ENCODE measurements at regions of chr10 and their contacts with region 1.

Region 1: GRCh38 chr10:123967396-123968243 is 76.0 kb upstream of the CPXM2 start:
- DNase-seq: peak; percentile 78 to 87 (median 87)
- ATAC-seq: peak; percentile 67 to 83
- H3K4me3 ChIP-seq: no peak overlapping the region
- H3K27ac ChIP-seq: no peak overlapping the region
- H3K4me1 ChIP-seq: no peaks in the 10 kb centered on the region
- H3K27me3 ChIP-seq: no peaks in the 10 kb centered on the region

Region 2: GRCh38 chr10:123582084-123582989 is 385.3 kb before region 1 on chr10:
- intact Hi-C with region 1: loop called (anchors 2 to 5 kb)
- DNase-seq: peak; percentile 71 to 87 (median 86)
- ATAC-seq: peak; percentile 65 to 66
- H3K4me3 ChIP-seq: no peak overlapping the region
- H3K27ac ChIP-seq: no peak overlapping the region
- H3K4me1 ChIP-seq: no peaks in the 10 kb centered on the region
- H3K27me3 ChIP-seq: no peaks in the 10 kb centered on the region

Region 3: DNA sequence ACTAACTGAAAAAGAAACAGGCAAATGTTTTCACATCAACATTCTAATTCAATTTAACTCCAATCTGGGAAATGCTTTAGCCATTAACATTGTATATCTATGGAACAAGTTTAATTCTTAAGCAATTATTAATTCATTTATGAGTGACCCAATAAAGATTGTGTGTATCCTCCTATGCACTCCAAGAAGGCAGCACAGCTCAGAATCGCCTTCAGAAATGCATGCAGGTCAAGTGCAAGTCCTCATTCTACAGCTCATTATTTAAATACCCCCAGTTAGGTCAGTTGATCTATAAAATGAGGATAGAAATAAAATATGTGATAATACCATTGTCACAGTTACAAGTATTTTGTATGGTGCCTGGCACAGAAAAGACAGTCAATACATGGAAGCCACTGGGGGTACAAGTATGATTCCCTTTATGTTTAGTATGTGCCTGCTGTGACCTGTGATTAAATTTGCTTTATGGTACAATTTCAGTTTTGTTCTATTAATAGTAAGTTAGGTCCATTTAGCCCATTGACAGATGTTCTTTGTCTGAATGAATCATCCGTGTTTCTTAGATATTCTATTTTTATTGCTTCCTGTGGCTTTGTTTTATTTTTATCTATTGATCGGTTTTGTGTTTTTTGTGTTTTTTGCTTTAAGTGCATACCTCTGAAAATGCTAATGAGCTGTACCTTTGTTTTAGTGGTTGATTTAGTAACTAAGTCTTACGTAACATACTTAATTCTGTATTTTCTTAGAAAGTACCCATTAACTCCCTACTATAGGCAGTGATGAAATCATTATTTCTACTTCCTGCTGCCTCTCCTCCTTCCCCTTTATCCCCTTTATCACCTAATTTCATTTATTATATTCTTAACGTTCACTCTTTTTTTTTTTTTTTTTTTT is 118.8 kb before region 1 on chr10:
- intact Hi-C with region 1: no loop called
- DNase-seq: no peak
- ATAC-seq: no peak
- H3K4me3 ChIP-seq: no peak overlapping the region
- H3K27ac ChIP-seq: no peak overlapping the region
- H3K4me1 ChIP-seq: no peaks in the 10 kb centered on the region
- H3K27me3 ChIP-seq: no peaks in the 10 kb centered on the region